AG04449 (cell line): ENCODE measurements at regions of chr12 and their contacts with region 1.

Region 1: GRCh38 chr12:108664338-108665258 is 30.9 kb upstream of the SELPLG start:
- DNase-seq: peak; percentile 81
- H3K4me3 ChIP-seq: no peak overlapping the region
- CTCF ChIP-seq: peak; percentile 79

Region 2: DNA sequence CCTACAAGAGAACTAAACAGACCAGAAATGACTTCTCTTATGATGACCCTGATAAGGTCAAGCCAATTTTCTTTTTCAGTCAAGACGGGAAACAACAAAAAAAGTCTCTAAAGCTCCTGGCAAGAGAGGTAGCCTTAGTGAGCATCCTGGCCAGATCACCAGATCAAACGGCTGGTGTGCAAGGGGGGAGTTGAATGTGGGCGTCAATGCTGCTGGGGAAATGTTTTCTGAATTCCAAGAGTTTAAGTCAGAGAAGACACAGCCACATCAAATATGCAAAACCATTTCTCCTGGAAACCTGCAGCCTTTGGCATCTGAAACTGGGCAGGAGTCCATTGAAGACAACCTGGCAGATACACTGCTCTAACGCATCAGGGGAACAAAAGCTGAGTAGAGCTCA is 14.9 kb before region 1 on chr12:
- CTCF ChIA-PET with region 1: interaction called, 37 read pairs
- POLR2A ChIA-PET with region 1: no interaction called
- DNase-seq: peak; percentile 59
- H3K4me3 ChIP-seq: no peak overlapping the region
- CTCF ChIP-seq: no peak

Region 3: GRCh38 chr12:108685469-108686260 is 21.1 kb after region 1 on chr12:
- CTCF ChIA-PET with region 1: interaction called, 57 read pairs
- POLR2A ChIA-PET with region 1: interaction called, 3 read pairs
- DNase-seq: no peak
- H3K4me3 ChIP-seq: no peak overlapping the region
- CTCF ChIP-seq: no peak

Region 4: GRCh38 chr12:108731105-108731865 is 66.7 kb after region 1 on chr12 and contains the start of gene CORO1C:
- CTCF ChIA-PET with region 1: interaction called, 14 read pairs
- POLR2A ChIA-PET with region 1: interaction called, 3 read pairs
- DNase-seq: no peak
- H3K4me3 ChIP-seq: peak within 1 kb of the TSS; percentile 99
- CTCF ChIP-seq: peak; percentile 99

Region 5: GRCh38 chr12:108784270-108784669 is 119.7 kb after region 1 on chr12:
- CTCF ChIA-PET with region 1: interaction called, 15 read pairs
- POLR2A ChIA-PET with region 1: interaction called, 3 read pairs
- DNase-seq: no peak
- H3K4me3 ChIP-seq: no peak overlapping the region
- CTCF ChIP-seq: no peak

Region 6: GRCh38 chr12:108865169-108865568 is 200.6 kb after region 1 on chr12:
- CTCF ChIA-PET with region 1: no interaction called
- POLR2A ChIA-PET with region 1: no interaction called
- DNase-seq: no peak
- H3K4me3 ChIP-seq: no peak overlapping the region
- CTCF ChIP-seq: no peak

Region 7: GRCh38 chr12:109093022-109093918 is 428.7 kb after region 1 on chr12 and contains the start of gene ALKBH2:
- CTCF ChIA-PET with region 1: interaction called, 16 read pairs
- POLR2A ChIA-PET with region 1: no interaction called
- DNase-seq: peak; percentile 34
- H3K4me3 ChIP-seq: peak within 1 kb of the TSS; percentile 78
- CTCF ChIP-seq: peak; percentile 99